IMR-90 (cell line): ENCODE measurements at regions of chr14 and their contacts with region 1.

Region 1: DNA sequence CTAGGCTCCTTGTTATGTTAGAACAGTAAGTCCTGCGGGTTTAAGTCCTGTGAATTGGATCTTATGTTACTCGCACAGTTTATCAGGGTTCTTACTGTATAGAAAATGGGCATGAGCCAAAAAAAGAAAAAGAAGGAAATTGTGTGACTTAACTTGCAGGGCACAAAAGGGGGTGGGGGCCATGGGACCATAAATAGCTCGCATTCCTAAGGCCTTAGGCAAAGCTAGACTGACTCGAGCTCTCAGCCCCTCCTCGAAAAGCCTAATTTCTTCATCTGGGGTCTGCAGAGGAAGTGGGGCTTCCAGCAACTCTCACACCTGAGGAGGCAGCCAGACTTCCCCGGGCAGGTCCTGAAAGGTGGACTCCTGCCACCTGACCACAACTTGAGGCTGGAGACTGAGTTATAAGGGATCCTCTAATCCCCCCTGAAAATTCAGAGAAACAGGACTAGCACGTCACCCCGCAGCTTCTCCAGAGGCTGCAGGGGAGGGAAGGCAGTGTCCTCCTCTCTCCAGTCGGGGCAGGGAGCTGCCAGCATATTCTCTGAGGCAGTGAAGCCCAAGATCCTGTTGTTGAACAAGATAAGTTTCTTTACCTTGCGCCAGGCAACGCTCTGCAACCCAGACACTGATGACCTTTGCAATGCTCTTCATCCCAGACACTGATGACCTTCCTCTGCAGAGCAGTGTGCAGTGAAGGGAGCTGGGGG is 280.5 kb downstream of the PCNX1 start:
- DNase-seq: no peak
- ATAC-seq: no peak
- H3K4me3 ChIP-seq: no peak overlapping the region
- H3K27ac ChIP-seq: no peak overlapping the region
- H3K4me1 ChIP-seq: no peaks in the 10 kb centered on the region
- H3K27me3 ChIP-seq: no peaks in the 10 kb centered on the region; the same call in 1 of the 2 replicates
- CTCF ChIP-seq: no peak
- POLR2A ChIP-seq: no peak
- RAD21 ChIP-seq: no peak

Region 2: DNA sequence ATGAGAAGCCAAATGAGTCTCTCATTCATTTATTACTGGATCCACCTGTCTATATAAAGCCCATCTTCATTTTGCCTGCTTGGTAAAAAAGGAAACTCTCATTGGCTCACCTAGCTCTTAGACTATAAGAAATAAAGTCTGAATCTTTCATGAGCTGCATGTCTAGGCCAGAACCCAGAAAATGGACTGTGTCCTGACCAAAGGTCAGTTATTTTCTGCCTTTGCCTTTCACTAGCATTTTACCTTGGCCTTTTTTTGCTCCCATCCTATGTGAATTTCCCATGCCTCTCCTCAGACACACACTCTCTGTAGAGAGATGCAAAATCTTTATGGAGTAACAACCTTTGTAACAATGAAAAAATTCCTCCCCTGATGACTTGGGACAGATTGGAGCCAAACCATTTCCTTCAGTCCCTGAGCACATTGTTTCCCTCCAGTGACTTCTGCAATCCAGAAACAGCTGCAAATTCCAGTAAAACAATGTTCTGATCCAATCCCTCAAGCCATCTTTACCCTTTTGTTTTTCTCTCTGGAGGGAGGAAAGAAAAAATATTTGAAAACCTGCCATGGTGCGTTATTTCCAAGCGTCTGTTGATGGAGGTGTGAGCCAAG is 344.8 kb before region 1 on chr14:
- CTCF ChIA-PET with region 1: no interaction called
- POLR2A ChIA-PET with region 1: interaction called, 11 read pairs
- dilution Hi-C with region 1: no loop called
- in situ Hi-C with region 1: no loop called
- intact Hi-C with region 1: no loop called
- DNase-seq: no peak
- ATAC-seq: no peak
- H3K4me3 ChIP-seq: no peak overlapping the region
- H3K27ac ChIP-seq: no peak overlapping the region
- H3K4me1 ChIP-seq: no peaks in the 10 kb centered on the region
- H3K27me3 ChIP-seq: peaks cover 11% of the 10 kb centered on the region
- CTCF ChIP-seq: no peak
- POLR2A ChIP-seq: no peak
- RAD21 ChIP-seq: no peak